ENCODE measurements at regions of chr14 and their contacts with region 1.

Region 1: GRCh38 chr14:69242311-69243224 is 17.4 kb upstream of the GALNT16 start:
- DNase-seq: peak in 4 of 10 donors; percentile 23 to 58 (median 40)

Region 2: DNA sequence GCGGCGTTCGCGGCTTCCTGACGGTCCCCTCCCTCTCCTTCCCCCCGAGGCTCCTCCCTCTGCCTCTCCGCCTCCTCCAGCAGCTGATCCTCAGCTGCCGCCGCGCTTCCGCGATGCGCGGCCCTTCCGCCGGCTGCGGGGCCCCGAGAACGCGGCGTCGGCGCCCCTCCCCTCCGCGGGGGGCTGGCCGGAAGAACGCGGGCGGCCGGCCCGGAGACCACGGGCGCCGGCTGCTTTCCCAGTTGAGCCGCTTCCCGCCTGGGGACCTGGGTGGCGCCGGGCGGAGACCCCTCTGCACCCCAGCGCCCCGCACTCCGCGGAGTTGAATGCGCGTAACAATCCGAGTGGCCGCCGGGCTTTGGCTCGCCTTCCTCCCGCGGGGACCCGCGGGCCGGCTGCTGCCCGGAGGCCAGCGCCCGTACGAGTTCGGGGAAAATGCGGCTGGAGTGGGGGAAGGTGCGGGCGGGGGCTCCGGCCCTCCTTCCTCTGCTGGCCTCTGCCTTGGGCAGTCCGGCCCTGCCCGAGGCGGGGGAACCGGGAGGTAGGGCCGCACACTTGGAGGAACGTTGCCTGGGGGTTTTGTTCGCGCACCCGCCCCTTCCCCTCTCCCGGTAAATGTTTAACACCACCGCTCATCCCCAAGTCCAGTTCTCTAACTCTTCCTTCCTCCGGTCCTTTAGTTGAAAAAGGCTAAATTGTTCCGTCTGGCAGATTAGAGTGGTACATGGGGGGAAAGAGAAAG is 89.3 kb before region 1 on chr14:
- intact Hi-C with region 1: loop called (anchors 5 kb)
- DNase-seq: peak; percentile 67 to 98 (median 88)

Region 3: DNA sequence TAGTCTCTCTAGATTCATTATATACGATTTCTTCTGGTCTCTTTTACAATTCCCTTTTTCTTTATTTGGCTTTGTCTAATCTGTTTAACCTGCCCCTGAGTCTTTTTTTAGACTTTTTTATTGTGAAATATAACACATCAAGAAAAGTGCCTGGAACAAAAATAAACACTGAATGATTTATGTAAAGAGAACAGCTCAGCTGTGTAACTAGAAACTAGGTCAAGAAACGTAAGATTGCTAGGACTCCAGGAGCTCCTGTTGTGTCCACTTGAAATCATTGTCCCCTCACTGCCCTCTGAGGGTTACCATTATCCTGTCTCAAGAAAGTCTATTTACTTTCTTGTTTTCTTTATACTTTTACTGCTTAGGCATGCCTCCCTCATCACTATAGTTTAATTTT is 28.2 kb before region 1 on chr14:
- intact Hi-C with region 1: no loop called
- DNase-seq: no peak

Region 4: GRCh38 chr14:69363055-69363454 is 120.5 kb after region 1 on chr14:
- intact Hi-C with region 1: loop called (anchors 2 kb)
- DNase-seq: peak in 6 of 10 donors; percentile 34 to 93 (median 50)

Region 5: GRCh38 chr14:69460093-69460701 is 217.6 kb after region 1 on chr14:
- intact Hi-C with region 1: loop called (anchors 1 kb)
- DNase-seq: peak in 8 of 10 donors; percentile 25 to 91 (median 61)